Activated CD4-positive, alpha-beta T cell treated with anti-CD3 and anti-CD28 coated beads for 36 hours (primary cell): ENCODE measurements at regions of chr7 and their contacts with region 1.

Region 1: DNA sequence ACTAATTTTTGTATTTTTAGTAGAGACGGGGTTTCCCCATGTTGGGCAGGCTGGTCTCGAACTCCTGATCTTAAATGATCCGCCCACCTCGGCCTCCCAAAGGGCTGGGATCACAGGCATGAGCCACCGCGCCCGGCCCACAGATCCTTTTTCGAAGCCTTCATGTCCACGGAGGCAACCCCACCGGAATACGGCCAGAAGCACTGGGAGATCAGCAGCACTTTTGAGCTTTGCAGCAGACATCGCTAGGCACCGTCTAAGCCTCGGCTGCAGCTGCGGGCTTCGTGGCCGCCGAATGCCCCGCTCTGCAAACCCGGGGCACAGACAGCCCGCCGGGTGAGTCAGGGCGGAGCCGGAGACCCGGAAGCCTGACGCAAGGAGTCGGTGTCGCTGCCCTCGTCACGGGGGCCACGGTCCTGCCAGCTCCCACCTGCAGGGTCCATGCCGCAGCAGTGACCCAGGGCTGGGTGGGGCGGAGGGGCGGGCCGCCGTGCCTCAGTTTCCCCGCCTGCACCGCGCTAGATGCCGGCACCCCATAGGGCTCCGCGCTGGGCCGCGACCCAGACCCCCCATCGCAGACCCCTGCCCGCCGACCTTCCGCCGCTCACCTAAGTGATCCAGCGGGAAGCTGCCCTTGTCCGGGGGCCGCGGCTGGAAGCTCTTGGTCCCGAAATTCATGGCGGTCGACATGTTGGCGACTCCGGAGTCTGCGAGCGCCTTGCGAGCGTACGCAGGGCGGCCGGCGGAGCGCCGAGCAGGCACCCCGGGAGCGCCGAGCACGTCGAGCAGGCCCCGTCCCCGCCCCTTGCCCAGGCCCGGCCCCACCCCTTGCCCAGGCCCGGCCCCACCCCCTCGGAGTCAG is at the start of gene COX19:
- DNase-seq: peak; percentile 96
- ATAC-seq: peak; percentile 93
- H3K4me3 Mint-ChIP-seq: peak within 1 kb of the TSS; percentile 94
- H3K27ac Mint-ChIP-seq: peak within 1 kb of the TSS; percentile 94
- H3K4me1 Mint-ChIP-seq: peaks cover 30% of the 10 kb centered on the region
- H3K27me3 Mint-ChIP-seq: no peaks in the 10 kb centered on the region
- total RNA-seq, gene COX19: 11.3 to 14.6 TPM

Region 2: DNA sequence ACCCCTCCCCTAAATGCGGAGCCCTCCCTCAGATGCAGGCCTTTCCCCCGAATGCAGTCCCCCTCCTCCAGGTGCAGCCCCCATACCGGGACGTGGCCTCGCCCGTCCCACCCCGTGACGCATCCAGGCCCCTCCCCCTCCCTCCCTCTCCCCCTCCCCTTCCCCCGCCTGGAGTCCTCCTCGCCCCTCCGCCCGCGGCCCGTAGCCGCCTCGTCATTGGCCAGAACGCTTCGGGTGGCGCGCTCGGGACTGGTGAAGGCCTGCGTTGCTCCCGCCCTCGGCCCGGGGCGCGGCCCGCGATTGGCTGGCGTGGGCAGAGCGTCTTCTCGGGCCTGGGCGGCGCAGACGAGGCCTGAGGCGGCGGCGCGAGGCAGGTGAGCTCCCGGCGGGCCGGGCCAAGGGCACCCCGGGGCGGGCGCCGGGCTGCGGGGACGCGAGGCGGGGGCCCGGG is 158.7 kb before region 1 on chr7:
- CTCF ChIA-PET with region 1: no interaction called
- POLR2A ChIA-PET with region 1: no interaction called
- intact Hi-C with region 1: loop called (anchors 1 to 10 kb)
- DNase-seq: peak; percentile 99
- ATAC-seq: peak; percentile 97
- H3K4me3 Mint-ChIP-seq: peak overlapping the region; percentile 60
- H3K27ac Mint-ChIP-seq: no peak overlapping the region
- H3K4me1 Mint-ChIP-seq: peaks cover 62% of the 10 kb centered on the region
- H3K27me3 Mint-ChIP-seq: peaks cover 6% of the 10 kb centered on the region

Region 3: DNA sequence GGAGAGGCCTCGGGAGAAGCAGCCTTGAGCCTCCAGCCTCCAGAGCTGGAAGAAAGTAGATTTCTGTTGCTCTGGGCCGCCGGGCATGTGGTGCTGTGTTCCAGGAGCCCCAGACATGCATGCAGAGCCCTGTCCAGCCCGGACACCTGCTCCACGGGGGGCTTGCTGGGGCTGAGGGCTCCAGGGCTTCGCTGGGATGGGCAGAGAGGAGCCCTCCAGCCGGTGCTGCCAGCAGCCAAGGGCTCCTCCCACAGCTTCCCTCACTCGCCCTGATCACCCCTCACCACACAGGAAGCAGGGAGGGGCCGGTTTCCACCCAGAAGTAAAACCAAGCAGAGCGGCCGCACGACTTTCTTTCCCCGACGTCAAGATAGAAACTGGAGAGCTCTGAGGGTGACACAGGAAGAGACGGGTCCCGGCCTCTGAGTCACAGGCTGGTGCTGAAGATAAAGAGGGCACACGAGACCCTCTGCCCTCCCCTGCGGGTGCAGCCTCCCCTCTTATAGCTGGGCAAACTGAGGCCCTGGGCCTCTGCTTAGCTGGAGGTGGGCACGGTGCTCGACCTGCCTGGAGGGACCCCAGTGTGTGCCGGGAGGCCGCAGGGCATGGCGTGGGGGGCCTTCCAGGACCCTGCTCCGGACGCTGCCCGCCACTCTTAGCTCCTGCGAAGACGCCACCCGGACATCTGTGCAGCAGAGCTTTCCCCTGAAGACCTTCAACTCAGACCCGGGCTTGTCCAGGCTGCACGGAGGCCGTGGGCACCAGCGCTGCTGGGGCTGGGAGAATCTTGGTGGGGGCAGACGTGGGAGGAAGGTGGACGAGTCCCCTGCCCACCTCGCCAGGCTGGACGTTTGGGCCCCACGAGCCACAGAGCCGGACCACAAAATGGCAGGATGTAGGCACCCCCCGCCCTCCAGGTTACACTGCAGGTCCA is 51.7 kb before region 1 on chr7:
- CTCF ChIA-PET with region 1: no interaction called
- POLR2A ChIA-PET with region 1: interaction called, 3 read pairs
- intact Hi-C with region 1: loop called (anchors 1 to 2 kb)
- DNase-seq: peak; percentile 97
- ATAC-seq: peak; percentile 92
- H3K4me3 Mint-ChIP-seq: peak overlapping the region; percentile 72
- H3K27ac Mint-ChIP-seq: peak overlapping the region; percentile 93
- H3K4me1 Mint-ChIP-seq: peaks cover 39% of the 10 kb centered on the region
- H3K27me3 Mint-ChIP-seq: no peaks in the 10 kb centered on the region

Region 4: DNA sequence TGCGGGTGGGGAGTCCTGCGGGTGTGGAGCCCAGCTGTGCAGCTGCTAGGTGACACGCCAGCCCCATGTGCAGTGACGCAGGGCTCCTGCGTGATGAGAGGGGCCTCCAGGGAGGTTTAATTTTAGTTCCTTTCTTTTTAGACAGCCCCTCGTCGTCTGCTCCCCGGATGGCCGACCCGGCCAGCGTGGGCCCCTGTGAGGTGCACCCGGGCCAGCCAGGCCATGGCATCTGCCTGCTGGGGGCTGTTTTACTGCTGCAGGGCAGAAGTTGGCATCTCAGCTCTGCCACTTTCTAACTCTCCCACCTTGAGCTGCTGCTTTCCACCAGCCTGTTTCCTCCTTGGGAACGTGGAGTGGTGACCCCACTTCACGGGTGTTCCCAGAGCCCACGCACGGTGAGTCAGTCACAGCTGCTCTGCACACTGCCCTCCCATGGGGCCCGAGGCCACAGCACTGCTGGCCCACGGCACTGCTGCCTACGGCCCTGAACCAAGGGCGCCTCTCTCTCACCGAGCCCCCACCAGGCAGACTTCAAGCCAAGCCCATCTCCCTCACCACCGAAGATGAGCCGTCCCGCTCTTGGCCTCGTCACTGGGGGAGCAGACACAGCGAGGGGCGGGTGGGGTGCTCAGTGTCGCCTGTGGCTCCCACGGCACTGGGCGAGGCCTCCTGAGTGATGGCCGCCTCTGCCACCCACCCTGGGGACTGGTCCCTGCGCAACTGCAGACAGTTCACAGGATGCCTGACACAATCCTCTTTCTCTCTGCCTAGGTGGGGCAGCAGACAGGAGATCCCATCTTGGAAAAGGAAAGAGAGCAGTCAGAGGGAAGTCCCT is 29.2 kb after region 1 on chr7:
- CTCF ChIA-PET with region 1: no interaction called
- POLR2A ChIA-PET with region 1: no interaction called
- intact Hi-C with region 1: no loop called
- DNase-seq: no peak
- ATAC-seq: no peak
- H3K4me3 Mint-ChIP-seq: no peak overlapping the region
- H3K27ac Mint-ChIP-seq: no peak overlapping the region
- H3K4me1 Mint-ChIP-seq: no peaks in the 10 kb centered on the region
- H3K27me3 Mint-ChIP-seq: no peaks in the 10 kb centered on the region

Region 5: DNA sequence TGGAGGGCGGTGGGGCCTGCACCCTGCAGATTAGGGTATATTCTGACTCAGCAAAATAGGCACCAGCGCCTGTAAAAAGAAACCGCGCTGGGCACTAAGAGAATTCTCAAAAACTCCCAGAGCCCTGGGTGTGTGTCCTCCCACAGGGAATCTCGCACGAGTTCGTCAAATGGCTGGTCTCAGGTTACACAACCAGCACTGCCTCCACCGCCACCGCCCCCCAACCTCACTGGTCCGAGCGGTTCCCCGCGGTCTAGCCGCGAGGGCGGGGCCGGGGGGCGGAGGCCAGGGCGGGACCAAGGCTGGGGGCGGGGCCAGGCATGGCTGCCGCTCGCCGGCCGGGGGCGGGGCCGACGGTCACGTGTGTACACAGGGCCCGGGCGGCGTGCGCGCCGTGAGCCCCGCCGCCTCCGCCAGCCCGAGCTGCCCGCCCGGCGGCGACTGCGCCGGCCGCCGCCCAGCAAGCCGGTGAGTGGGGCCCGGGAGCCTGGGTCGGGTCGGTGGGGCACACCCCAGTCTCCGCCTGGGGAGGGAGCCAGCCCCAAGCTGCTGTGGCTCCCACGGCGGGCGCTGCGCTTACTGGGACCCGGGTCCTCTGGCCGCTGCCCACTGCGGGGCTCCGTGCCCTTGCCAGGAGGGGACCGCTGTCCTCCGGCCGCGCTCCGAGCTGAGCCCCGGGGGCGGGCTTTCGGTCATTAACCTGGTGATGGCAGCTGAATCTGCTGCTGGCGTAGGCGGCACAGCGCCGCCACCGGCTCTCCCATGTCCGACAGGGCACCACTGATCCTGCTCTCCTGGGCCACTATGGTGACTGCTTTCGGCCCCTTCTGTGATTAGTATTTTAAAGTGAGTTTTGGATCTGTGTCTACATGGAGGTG is 69.4 kb after region 1 on chr7 and contains the start of gene GPR146:
- CTCF ChIA-PET with region 1: no interaction called
- POLR2A ChIA-PET with region 1: interaction called, 4 read pairs
- intact Hi-C with region 1: loop called in 1 of 2 experiments (anchors 5 kb)
- DNase-seq: peak; percentile 96
- ATAC-seq: peak; percentile 88
- H3K4me3 Mint-ChIP-seq: peak within 1 kb of the TSS; percentile 78
- H3K27ac Mint-ChIP-seq: peak within 1 kb of the TSS; percentile 73
- H3K4me1 Mint-ChIP-seq: peaks cover 61% of the 10 kb centered on the region
- H3K27me3 Mint-ChIP-seq: no peaks in the 10 kb centered on the region
- total RNA-seq, gene GPR146: 4.7 to 5.6 TPM

Region 6: GRCh38 chr7:1123715-1124114 is 148.7 kb after region 1 on chr7:
- CTCF ChIA-PET with region 1: no interaction called
- POLR2A ChIA-PET with region 1: no interaction called
- intact Hi-C with region 1: no loop called
- DNase-seq: peak; percentile 2
- ATAC-seq: no peak
- H3K4me3 Mint-ChIP-seq: no peak overlapping the region
- H3K27ac Mint-ChIP-seq: no peak overlapping the region
- H3K4me1 Mint-ChIP-seq: peaks cover 7% of the 10 kb centered on the region
- H3K27me3 Mint-ChIP-seq: no peaks in the 10 kb centered on the region

Region 7: DNA sequence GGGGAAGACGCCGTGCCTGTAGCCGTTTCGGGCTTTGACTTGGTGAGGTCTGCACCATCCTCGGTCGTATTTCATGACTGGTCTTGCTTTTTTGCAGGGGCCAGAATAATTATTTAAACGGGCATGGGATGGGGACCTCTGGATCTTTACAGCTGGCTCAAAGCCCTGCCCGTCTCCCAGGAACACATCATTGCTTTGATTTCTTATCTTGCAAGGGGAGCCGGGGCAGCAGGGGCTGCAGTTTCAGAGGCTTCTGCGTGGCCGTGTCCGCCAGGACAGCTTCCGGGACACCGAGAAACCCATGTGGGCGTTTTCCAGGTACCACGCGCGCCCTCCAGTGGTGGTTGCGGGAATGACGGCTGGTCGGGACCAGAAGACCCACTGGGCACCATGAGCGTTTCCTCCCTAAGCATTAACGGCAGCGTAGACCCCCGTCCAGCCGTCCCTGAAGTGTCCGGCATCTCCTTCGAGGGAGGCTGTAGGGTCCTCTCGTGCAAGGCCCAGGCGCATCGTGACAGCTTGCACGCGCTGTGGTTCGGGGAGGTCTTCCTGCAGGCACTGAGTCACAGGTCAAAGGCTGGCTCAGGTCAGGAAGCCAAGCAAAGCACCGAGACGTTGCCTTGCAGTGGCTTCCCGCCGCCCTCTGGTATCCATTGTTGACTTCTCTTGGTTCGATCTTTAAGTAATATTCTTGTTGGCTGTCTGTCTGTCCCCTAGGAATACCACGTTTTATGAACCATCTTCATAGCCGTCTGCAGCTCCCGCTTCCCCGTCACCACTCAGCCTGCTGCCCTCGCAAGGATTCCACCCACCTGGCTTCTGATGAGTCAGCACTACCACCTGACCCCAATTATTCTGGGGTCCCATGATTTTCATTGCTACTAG is 201.2 kb after region 1 on chr7:
- CTCF ChIA-PET with region 1: no interaction called
- POLR2A ChIA-PET with region 1: no interaction called
- intact Hi-C with region 1: loop called in 1 of 2 experiments (anchors 1 kb)
- DNase-seq: peak; percentile 92
- ATAC-seq: peak; percentile 82
- H3K4me3 Mint-ChIP-seq: peak overlapping the region; percentile 45
- H3K27ac Mint-ChIP-seq: peak overlapping the region; percentile 43
- H3K4me1 Mint-ChIP-seq: peaks cover 11% of the 10 kb centered on the region
- H3K27me3 Mint-ChIP-seq: peaks cover 8% of the 10 kb centered on the region

Region 8: DNA sequence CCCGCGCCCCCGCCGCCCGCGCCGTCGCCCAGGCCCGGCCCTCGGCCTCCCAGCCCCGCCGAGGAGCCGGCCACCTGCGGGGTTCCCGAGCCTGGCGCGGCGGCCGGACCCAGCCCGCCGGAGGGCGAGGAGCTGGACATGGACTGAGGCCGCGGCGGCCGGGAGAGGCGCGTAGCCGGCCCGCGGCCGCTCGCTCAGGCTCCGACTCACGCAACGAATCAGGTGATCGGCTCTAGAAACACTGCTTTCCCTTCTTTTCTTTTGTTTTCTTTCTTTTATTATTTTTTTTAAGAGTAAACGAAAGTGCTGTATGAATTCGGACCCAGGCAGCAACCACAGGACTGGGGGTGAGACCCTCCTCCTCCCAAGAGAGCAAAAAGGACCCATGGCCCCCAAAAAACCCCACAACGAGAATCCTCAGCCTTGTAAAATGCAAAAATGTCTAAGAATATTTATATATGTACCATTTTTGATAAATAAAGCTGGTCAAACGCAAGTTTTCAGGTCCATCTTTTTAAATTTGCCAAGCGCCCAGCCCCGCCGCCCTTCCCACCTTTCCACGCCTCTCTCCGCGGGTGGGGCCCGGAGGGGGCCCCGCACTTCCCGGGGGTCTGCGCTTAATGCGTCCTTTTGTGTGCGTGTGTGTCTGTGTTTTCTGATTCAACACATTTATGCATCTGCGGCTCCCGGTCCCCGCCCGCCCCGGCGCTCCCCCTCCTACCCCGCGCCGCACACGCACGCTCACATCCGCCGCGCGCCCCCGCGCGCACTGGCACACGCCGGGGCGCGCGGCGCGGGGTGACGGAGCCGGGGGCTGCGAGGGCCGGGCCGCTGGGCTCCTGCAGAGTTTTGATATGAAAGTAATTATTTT is 262.0 kb after region 1 on chr7:
- CTCF ChIA-PET with region 1: no interaction called
- POLR2A ChIA-PET with region 1: no interaction called
- intact Hi-C with region 1: no loop called
- DNase-seq: no peak
- ATAC-seq: no peak
- H3K4me3 Mint-ChIP-seq: no peak overlapping the region
- H3K27ac Mint-ChIP-seq: no peak overlapping the region
- H3K4me1 Mint-ChIP-seq: peaks cover 19% of the 10 kb centered on the region
- H3K27me3 Mint-ChIP-seq: peaks cover 53% of the 10 kb centered on the region